Panc1 (cell line): ENCODE measurements at regions of chr12 and their contacts with region 1.

Region 1: DNA sequence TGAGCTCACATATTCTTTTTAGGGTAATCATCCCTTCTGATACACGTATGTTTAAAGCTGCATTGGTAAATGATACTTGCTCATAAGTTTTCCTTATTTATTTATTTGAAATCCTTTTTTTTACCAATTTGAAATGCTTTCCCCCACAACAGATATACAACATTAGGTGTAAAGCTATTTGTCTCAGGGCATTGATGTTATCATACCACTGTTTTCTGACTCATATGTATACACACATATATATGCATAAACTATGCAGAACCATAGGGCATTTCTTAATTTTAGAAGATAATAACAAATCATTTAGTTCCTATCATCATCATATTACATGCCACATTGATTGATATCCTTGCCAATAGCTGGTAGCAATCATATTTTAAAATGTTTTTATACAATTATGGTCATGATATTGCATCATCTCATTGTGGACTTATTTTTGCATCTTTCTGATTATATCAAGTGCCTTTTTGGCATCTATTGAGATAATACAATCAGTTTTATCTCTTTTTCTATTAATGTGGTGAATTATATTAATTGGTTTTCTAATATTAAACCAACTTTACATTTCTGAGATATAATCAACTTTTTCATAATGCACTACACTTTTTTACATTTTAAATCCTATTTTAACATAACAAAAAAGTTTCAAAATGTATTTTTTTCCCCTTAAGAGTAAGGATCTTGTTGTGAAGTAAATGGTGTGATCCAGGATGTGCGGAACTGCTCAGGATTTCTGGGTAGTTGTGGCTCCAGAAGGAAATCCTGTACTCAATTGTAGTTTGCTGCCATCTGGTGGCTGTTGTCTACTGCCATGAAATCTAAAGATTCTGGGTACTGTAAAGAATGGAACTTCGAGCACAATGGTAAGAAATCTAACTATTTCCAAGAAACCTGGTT is 16.7 kb downstream of the OR9K2 start:
- DNase-seq: peak; percentile 25
- ATAC-seq: peak; percentile 78; the same call in 1 of the 2 replicates
- H3K4me3 ChIP-seq: no peak overlapping the region
- H3K27ac ChIP-seq: no peak overlapping the region
- H3K4me1 ChIP-seq: no peaks in the 10 kb centered on the region
- H3K27me3 ChIP-seq: peaks cover 2% of the 10 kb centered on the region; the same call in 1 of the 2 replicates
- CTCF ChIP-seq: peak; percentile 83

Region 2: DNA sequence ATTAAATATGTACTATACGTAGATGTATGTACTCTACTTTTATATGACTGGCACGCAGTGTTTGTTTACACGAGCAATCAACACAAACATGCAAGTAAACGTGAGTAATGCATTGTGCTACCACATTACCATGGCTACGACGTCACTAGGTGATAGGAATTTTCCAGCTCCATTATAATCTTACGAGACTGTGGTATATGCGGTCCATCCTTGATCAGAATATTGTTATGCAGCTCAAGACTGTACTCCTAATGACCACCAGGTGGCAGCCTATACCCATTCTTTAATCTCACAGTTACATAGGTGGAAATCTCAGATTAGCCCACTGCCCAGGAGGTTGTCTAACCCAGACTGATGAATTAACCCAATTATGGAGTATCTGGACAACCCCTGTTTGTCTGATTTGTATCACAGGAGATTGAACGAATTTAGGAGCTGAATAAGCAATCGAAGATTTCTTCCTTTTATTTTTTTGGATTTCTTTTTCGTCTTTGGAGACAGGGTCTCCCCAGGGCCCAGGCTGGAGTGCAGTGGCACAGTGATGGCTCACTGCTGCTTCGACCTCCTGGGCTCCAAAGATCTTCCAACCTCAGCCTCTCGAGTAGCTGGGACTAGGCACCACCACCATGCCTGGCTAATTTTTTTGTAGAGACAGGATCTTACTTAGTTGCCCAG is 149.6 kb before region 1 on chr12:
- CTCF ChIA-PET with region 1: interaction called, 7 read pairs
- POLR2A ChIA-PET with region 1: no interaction called
- in situ Hi-C with region 1: no loop called
- intact Hi-C with region 1: loop called (anchors 5 kb)
- DNase-seq: peak; percentile 58
- ATAC-seq: peak; percentile 94
- H3K4me3 ChIP-seq: no peak overlapping the region
- H3K27ac ChIP-seq: no peak overlapping the region
- H3K4me1 ChIP-seq: no peaks in the 10 kb centered on the region
- H3K27me3 ChIP-seq: peaks cover 22% of the 10 kb centered on the region
- CTCF ChIP-seq: peak; percentile 84